MCF 10A (cell line): ENCODE measurements at regions of chr13 and their contacts with region 1.

Region 1: GRCh38 chr13:101452519-101453485 is at the start of gene ITGBL1:
- DNase-seq: no peak
- H3K4me3 Mint-ChIP-seq: no peak within 1 kb of the TSS
- H3K27ac Mint-ChIP-seq: peak within 1 kb of the TSS; percentile 79
- H3K4me1 Mint-ChIP-seq: peaks cover 49% of the 10 kb centered on the region
- H3K27me3 Mint-ChIP-seq: no peaks in the 10 kb centered on the region
- CTCF ChIP-seq: no peak
- total RNA-seq, gene ITGBL1: 0.17 TPM in 1 of 2 replicates, not detected in the other

Region 2: DNA sequence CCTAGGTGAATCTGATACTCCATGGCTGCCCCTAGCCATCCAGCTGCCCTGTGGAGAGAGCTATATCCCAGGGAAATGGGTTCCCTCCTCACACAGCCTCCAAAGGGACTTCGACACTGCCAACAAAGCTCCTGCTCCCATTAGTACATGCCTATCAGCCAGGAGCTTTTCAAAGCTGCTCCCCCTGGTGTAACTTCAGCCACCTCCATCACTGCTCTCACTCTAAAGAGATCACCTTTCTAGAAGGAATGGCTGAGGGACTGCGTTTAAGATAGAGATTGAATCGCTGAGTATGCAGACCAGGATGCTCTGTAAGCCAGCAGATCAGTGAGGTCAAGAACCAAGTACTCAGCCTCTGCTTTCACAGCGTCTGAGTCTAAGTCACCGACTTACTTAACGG is 250.2 kb before region 1 on chr13:
- CTCF ChIA-PET with region 1: no interaction called
- POLR2A ChIA-PET with region 1: no interaction called
- intact Hi-C with region 1: loop called (anchors 10 kb)
- DNase-seq: no peak
- H3K4me3 Mint-ChIP-seq: no peak overlapping the region
- H3K27ac Mint-ChIP-seq: no peak overlapping the region
- H3K4me1 Mint-ChIP-seq: no peaks in the 10 kb centered on the region
- H3K27me3 Mint-ChIP-seq: no peaks in the 10 kb centered on the region
- CTCF ChIP-seq: no peak

Region 3: GRCh38 chr13:101309014-101309619 is 143.7 kb before region 1 on chr13:
- CTCF ChIA-PET with region 1: no interaction called
- POLR2A ChIA-PET with region 1: no interaction called
- intact Hi-C with region 1: no loop called
- DNase-seq: peak; percentile 39
- H3K4me3 Mint-ChIP-seq: no peak overlapping the region
- H3K27ac Mint-ChIP-seq: peak overlapping the region; percentile 88
- H3K4me1 Mint-ChIP-seq: peaks cover 24% of the 10 kb centered on the region
- H3K27me3 Mint-ChIP-seq: no peaks in the 10 kb centered on the region
- CTCF ChIP-seq: no peak

Region 4: GRCh38 chr13:101360525-101360924 is 92.3 kb before region 1 on chr13:
- CTCF ChIA-PET with region 1: no interaction called
- POLR2A ChIA-PET with region 1: no interaction called
- intact Hi-C with region 1: no loop called
- DNase-seq: no peak
- H3K4me3 Mint-ChIP-seq: no peak overlapping the region
- H3K27ac Mint-ChIP-seq: no peak overlapping the region
- H3K4me1 Mint-ChIP-seq: no peaks in the 10 kb centered on the region
- H3K27me3 Mint-ChIP-seq: no peaks in the 10 kb centered on the region
- CTCF ChIP-seq: no peak

Region 5: GRCh38 chr13:101397742-101398141 is 55.1 kb before region 1 on chr13:
- CTCF ChIA-PET with region 1: no interaction called
- POLR2A ChIA-PET with region 1: no interaction called
- intact Hi-C with region 1: no loop called
- DNase-seq: peak; percentile 48
- H3K4me3 Mint-ChIP-seq: no peak overlapping the region
- H3K27ac Mint-ChIP-seq: peak overlapping the region; percentile 11
- H3K4me1 Mint-ChIP-seq: peaks cover 10% of the 10 kb centered on the region
- H3K27me3 Mint-ChIP-seq: no peaks in the 10 kb centered on the region
- CTCF ChIP-seq: no peak

Region 6: GRCh38 chr13:101626925-101627555 is 174.2 kb after region 1 on chr13:
- CTCF ChIA-PET with region 1: no interaction called
- POLR2A ChIA-PET with region 1: no interaction called
- intact Hi-C with region 1: loop called (anchors 10 kb)
- DNase-seq: no peak
- H3K4me3 Mint-ChIP-seq: no peak overlapping the region
- H3K27ac Mint-ChIP-seq: peak overlapping the region; percentile 25
- H3K4me1 Mint-ChIP-seq: peaks cover 19% of the 10 kb centered on the region
- H3K27me3 Mint-ChIP-seq: no peaks in the 10 kb centered on the region
- CTCF ChIP-seq: no peak